Natural killer cell (primary cell): ENCODE measurements at regions of chr10 and their contacts with region 1.

Region 1: DNA sequence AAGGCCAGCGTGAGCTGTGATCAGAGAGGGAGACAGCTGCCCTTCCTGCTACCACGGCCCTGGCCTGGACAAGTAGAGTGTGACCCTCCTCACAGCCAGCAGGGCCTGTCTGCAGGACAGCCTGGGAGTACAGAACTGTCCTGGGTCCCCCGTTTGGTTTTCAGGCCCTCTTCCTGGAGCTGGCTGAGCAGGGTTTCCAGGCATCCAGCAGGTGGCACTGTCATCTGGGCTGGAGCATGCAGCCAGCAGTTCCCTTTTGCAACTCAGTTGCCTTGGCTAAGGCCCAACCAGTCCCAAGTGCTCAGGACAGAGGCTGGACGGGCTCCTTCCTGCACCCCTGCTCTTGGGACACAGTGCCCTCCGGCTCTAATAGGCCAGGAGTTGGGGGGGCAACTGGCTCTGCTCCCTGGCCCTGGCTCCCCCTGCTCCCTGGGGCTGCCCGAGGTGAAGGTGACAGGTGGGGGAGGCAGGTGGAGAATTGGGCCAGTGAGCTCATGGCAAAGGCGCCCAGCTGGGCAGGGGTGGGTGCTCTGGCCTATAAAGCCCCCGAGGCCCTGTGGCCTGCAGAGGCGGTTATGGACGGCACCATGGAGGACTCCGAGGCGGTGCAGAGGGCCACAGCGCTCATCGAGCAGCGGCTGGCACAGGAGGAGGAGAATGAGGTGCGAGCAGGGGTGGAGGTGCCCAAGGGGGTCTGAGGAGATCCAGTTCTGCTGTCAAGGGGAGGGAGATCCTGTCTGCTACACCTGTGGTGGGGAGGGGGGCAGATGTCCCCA is at the start of gene ANKRD2:
- DNase-seq: peak; percentile 64 to 69
- ATAC-seq: peak; percentile 79 to 98 (median 93)
- H3K4me3 ChIP-seq: no peak within 1 kb of the TSS
- H3K4me3 Mint-ChIP-seq: no peak within 1 kb of the TSS
- H3K27ac ChIP-seq: no peak within 1 kb of the TSS
- H3K27ac Mint-ChIP-seq: no peak within 1 kb of the TSS
- H3K4me1 ChIP-seq: peaks cover 4% of the 10 kb centered on the region
- H3K4me1 Mint-ChIP-seq: no peaks in the 10 kb centered on the region
- H3K27me3 ChIP-seq: no peaks in the 10 kb centered on the region
- H3K27me3 Mint-ChIP-seq: no peaks in the 10 kb centered on the region
- CTCF ChIP-seq: peak; percentile 81
- total RNA-seq, gene ANKRD2: not detected

Region 2: DNA sequence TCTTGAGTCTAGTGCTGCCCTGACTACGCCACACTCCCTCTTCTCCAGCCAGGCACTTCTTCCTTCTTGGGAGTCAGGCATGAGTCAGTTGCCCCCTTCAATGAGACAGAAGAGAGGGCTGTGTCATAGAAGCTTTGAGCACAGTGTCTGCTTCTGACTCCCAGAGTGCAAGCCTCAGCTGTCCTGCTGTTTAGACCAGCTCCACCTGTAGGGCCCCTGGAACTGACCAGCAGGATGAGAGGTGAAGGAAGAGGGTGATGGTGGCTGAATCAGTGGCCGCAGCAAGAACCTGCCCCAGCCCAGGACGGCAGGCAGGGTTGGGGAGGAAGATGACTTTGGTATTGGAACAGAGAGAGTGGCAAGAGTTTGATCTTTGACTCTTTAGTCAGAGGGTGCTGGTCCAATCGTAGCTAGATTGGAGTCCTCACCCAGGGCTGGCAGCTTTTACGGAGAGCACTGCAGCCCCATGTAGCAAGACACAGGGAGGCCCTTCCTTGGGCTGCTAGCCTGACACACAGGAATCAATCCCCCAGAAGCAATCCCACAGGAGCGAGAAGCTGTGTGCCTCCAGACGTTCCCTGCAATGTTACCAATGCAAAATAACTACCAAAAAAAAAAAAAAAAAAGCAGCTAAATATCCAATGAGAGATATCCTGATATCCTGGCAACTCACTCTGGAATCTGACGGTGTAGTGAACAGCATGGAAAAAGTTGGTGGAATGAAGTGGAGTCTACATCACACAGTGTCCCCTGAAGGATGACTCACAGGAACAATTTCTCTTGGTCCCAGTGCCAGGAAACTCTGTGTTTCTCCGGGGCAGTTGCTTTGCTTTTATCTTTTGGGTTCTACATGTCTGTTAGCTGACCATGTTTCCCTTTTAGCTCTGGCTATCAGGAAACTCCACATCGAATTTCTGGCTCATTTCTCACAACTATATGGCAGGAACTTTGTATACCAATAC is 24.0 kb after region 1 on chr10:
- intact Hi-C with region 1: no loop called
- DNase-seq: no peak
- ATAC-seq: no peak
- H3K4me3 ChIP-seq: no peak overlapping the region
- H3K4me3 Mint-ChIP-seq: no peak overlapping the region
- H3K27ac ChIP-seq: no peak overlapping the region
- H3K27ac Mint-ChIP-seq: no peak overlapping the region
- H3K4me1 ChIP-seq: peaks cover 6% of the 10 kb centered on the region
- H3K4me1 Mint-ChIP-seq: peaks cover 3 to 4% of the 10 kb centered on the region in 2 donors
- H3K27me3 ChIP-seq: no peaks in the 10 kb centered on the region
- H3K27me3 Mint-ChIP-seq: peaks cover 0 to 5% of the 10 kb centered on the region in 2 donors
- CTCF ChIP-seq: no peak

Region 3: GRCh38 chr10:97612386-97612785 is 40.0 kb after region 1 on chr10:
- intact Hi-C with region 1: loop called (anchors 1 kb)
- DNase-seq: peak in 1 of 2 donors; percentile 12
- ATAC-seq: peak in 2 of 3 donors; percentile 63 to 64
- H3K4me3 ChIP-seq: no peak overlapping the region
- H3K4me3 Mint-ChIP-seq: no peak overlapping the region
- H3K27ac ChIP-seq: no peak overlapping the region
- H3K27ac Mint-ChIP-seq: no peak overlapping the region
- H3K4me1 ChIP-seq: no peaks in the 10 kb centered on the region
- H3K4me1 Mint-ChIP-seq: no peaks in the 10 kb centered on the region
- H3K27me3 ChIP-seq: no peaks in the 10 kb centered on the region
- H3K27me3 Mint-ChIP-seq: peaks cover 0 to 3% of the 10 kb centered on the region in 2 donors
- CTCF ChIP-seq: no peak

Region 4: DNA sequence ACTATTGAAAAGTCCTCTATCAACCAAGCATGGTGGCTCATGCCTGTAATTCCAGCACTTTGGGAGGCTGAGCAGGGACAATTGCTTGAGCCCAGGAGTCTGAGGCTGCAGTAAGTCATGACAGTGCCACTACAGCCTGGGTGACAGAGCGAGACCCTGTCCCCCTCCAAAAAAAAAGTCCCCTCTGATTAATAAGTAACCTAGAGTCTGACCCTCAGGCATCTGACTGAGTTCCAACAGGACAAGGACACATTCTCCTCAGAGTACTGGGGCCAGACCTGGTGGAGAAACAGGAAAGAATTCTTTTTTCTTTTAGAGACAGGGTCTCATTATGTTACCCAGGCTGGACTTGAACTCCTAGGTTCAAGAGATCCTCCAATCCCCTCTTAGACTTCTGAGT is 50.9 kb after region 1 on chr10:
- intact Hi-C with region 1: no loop called
- DNase-seq: no peak
- ATAC-seq: no peak
- H3K4me3 ChIP-seq: no peak overlapping the region
- H3K4me3 Mint-ChIP-seq: no peak overlapping the region
- H3K27ac ChIP-seq: no peak overlapping the region
- H3K27ac Mint-ChIP-seq: no peak overlapping the region
- H3K4me1 ChIP-seq: no peaks in the 10 kb centered on the region
- H3K4me1 Mint-ChIP-seq: no peaks in the 10 kb centered on the region
- H3K27me3 ChIP-seq: no peaks in the 10 kb centered on the region
- H3K27me3 Mint-ChIP-seq: no peaks in the 10 kb centered on the region
- CTCF ChIP-seq: no peak

Region 5: GRCh38 chr10:97676770-97677581 is 104.6 kb after region 1 on chr10:
- intact Hi-C with region 1: loop called (anchors 1 kb)
- DNase-seq: peak; percentile 36 to 84
- ATAC-seq: peak; percentile 79 to 91 (median 85)
- H3K4me3 ChIP-seq: no peak overlapping the region
- H3K4me3 Mint-ChIP-seq: peak overlapping the region; percentile 13
- H3K27ac ChIP-seq: no peak overlapping the region
- H3K27ac Mint-ChIP-seq: peak overlapping the region; percentile 42 to 66
- H3K4me1 ChIP-seq: peaks cover 6% of the 10 kb centered on the region
- H3K4me1 Mint-ChIP-seq: no peaks in the 10 kb centered on the region
- H3K27me3 ChIP-seq: no peaks in the 10 kb centered on the region
- H3K27me3 Mint-ChIP-seq: no peaks in the 10 kb centered on the region
- CTCF ChIP-seq: peak; percentile 92

Region 6: GRCh38 chr10:97827778-97828291 is 255.4 kb after region 1 on chr10:
- intact Hi-C with region 1: no loop called
- DNase-seq: no peak
- ATAC-seq: no peak
- H3K4me3 ChIP-seq: no peak overlapping the region
- H3K4me3 Mint-ChIP-seq: no peak overlapping the region
- H3K27ac ChIP-seq: no peak overlapping the region
- H3K27ac Mint-ChIP-seq: peak overlapping the region in 1 of 2 donors; percentile 58
- H3K4me1 ChIP-seq: peaks cover 8% of the 10 kb centered on the region
- H3K4me1 Mint-ChIP-seq: peaks cover 23 to 37% of the 10 kb centered on the region in 2 donors
- H3K27me3 ChIP-seq: no peaks in the 10 kb centered on the region
- H3K27me3 Mint-ChIP-seq: no peaks in the 10 kb centered on the region
- CTCF ChIP-seq: no peak